CD8-positive, alpha-beta memory T cell (primary cell): ENCODE measurements at regions of chr17 and their contacts with region 1.

Region 1: GRCh38 chr17:57861000-57861789 is 11.4 kb upstream of the MRPS23 start:
- DNase-seq: peak; percentile 6 to 58 (median 22)
- H3K4me3 ChIP-seq: peak overlapping the region; percentile 14
- H3K4me3 Mint-ChIP-seq: peak overlapping the region; percentile 25 to 84 (median 79)
- H3K27ac ChIP-seq: no peak overlapping the region
- H3K27ac Mint-ChIP-seq: peak overlapping the region in 4 of 8 donors; percentile 47 to 93 (median 62)
- H3K4me1 ChIP-seq: peaks cover 13% of the 10 kb centered on the region
- H3K4me1 Mint-ChIP-seq: peaks cover 10 to 17% (median 11%) of the 10 kb centered on the region in 3 donors
- H3K27me3 ChIP-seq: peaks cover 4% of the 10 kb centered on the region
- H3K27me3 Mint-ChIP-seq: peaks cover 24 to 40% of the 10 kb centered on the region in 2 donors

Region 2: GRCh38 chr17:58112970-58113631 is 251.9 kb after region 1 on chr17:
- CTCF ChIA-PET with region 1: interaction called, 10 read pairs
- POLR2A ChIA-PET with region 1: no interaction called
- DNase-seq: peak; percentile 68 to 86 (median 74)
- H3K4me3 ChIP-seq: no peak overlapping the region
- H3K4me3 Mint-ChIP-seq: no peak overlapping the region
- H3K27ac ChIP-seq: no peak overlapping the region
- H3K27ac Mint-ChIP-seq: no peak overlapping the region
- H3K4me1 ChIP-seq: no peaks in the 10 kb centered on the region
- H3K4me1 Mint-ChIP-seq: peaks cover 0 to 4% (median 1%) of the 10 kb centered on the region in 3 donors
- H3K27me3 ChIP-seq: no peaks in the 10 kb centered on the region
- H3K27me3 Mint-ChIP-seq: peaks cover 9 to 41% of the 10 kb centered on the region in 2 donors